Activated T-helper 2 cell treated with anti-CD3 and anti-CD28 coated beads, Interferon-gamma antibody, Interleukin-2, Interleukin-4, amounts not matched to agents 10 μg/mL and 5 μg/mL and 100 μg/mL, durations not matched to agents 14 hours and 24 hours and 36 hours (primary cell): ENCODE measurements at regions of chr14 and their contacts with region 1.

Region 1: DNA sequence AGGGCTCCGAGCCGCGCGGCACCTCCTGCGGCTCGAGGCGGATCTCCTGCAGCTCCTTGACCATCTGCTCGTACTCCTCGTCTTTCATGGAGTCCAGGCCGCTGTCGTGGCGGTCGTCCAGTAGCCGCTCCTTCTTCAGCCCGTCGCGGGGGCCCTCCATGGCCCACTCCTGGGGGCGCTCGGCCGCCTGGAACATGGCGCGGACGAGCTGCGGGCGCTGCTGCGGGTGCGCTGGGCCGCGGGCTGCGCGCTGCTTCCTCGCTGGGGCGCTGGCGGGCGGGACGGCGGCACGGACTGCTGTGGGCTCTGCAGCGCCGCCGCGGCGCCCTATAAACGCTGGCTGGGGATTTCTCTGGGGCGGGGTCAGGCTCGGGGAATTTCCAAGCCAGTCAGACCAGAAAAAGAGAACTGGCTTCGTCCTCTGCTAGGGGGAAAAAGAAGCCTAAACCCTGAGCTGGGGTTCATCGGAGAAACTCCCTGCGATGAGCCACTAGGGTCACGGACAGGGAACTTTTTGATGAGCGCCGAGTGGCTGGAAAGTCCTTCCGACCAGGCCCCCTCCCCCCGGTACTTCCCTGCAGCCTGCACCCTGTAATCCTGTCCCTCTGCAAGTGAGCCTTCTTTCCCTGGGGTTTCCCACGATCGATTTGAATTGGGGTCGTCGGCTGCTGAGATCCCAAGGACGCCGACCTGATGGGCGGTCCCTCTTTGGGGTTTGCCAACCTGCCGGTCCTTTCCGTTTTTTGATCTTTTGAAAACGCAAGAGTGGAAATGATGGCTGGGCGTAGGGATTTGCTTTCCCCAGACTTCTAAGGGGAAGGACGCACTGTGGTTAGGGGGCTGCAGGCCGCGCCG is at the start of gene NFKBIA:
- DNase-seq: peak; percentile 93
- H3K4me3 Mint-ChIP-seq: peak within 1 kb of the TSS; percentile 99
- H3K27ac Mint-ChIP-seq: peak within 1 kb of the TSS; percentile 97
- H3K4me1 Mint-ChIP-seq: peaks cover 43% of the 10 kb centered on the region
- H3K27me3 Mint-ChIP-seq: no peaks in the 10 kb centered on the region
- total RNA-seq, gene NFKBIA: 386 and 390 TPM in 2 replicates

Region 2: DNA sequence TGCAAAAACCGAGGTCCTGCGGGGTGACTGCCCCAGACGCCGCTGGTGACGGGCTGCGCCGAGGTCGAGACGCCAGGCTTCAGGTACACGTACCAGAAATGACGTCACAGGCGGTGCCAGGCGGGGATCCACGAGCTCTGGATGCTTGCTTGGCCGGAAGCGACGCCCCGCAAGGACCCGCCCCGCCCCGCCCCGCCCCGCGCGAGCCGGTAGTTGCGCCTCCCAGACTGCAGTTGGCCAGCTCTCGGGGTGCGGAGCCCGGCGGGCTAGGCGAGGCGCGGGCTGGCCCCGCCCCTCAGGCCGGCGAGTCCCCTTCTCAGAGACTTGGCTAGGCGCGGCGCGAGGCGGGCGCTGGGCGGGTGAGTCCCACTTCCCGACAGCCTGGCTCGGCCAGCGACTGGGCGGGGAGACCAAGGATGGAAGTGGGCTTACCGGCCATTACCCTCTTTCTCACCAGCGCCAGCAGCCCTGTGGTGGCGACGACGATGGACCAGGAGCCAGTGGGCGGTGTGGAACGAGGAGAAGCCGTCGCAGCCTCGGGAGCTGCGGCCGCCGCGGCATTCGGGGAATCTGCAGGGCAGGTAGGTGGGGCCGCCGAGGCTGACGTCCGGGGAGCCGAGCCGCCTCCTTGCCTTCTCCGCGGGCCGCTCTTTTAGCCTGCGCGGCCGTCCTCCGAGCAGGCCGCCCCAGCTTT is 358.5 kb before region 1 on chr14 and contains the start of gene FAM177A1:
- intact Hi-C with region 1: loop called (anchors 5 kb)
- DNase-seq: peak; percentile 97
- H3K4me3 Mint-ChIP-seq: peak within 1 kb of the TSS; percentile 98
- H3K27ac Mint-ChIP-seq: peak within 1 kb of the TSS; percentile 98
- H3K4me1 Mint-ChIP-seq: peaks cover 21% of the 10 kb centered on the region
- H3K27me3 Mint-ChIP-seq: no peaks in the 10 kb centered on the region
- total RNA-seq, gene FAM177A1: 41.3 and 43.2 TPM in 2 replicates

Region 3: GRCh38 chr14:35068238-35069012 is 336.3 kb before region 1 on chr14:
- intact Hi-C with region 1: no loop called
- DNase-seq: no peak
- H3K4me3 Mint-ChIP-seq: no peak overlapping the region
- H3K27ac Mint-ChIP-seq: no peak overlapping the region
- H3K4me1 Mint-ChIP-seq: no peaks in the 10 kb centered on the region
- H3K27me3 Mint-ChIP-seq: no peaks in the 10 kb centered on the region

Region 4: DNA sequence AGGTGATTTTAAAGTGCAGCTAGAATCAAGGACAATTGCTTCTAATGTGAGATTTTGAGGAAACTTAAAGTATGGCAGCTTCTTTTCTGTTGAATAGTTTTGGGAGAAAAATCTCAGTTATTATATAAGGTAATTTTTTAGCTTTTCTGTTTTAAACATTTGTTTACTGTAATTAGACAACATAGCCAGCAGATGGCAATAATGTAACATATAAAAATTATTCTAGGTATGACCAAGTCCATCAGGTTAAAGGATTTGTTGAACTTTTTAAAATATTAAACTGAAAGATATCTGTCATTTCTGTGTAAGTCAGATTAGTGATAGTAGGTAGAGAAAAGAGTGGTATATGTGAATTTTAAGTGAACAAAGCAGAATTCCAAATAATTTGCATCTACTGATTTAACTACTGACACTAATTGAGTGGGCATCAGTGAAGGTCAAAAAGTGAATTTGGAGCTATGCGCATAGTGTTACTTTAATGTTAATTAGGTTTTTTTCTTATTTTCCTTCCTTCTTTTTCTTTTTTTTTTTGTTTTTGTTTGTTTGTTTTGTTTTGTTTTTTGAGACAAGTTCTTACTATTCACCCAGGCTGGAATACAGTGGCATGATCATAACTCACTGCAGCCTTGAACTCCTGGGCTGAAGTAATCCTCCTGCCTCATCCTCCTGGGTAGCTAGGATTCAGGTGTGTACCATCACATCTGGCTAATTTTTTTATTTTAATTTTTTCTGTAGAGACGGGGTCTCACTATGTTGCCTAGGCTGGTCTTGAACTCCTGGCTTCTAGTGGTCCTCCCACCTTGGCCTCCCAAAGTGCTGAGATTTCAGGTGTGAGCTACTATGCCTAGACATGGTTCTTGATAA is 263.7 kb before region 1 on chr14:
- intact Hi-C with region 1: loop called (anchors 1 kb)
- DNase-seq: no peak
- H3K4me3 Mint-ChIP-seq: no peak overlapping the region
- H3K27ac Mint-ChIP-seq: no peak overlapping the region
- H3K4me1 Mint-ChIP-seq: peaks cover 21% of the 10 kb centered on the region
- H3K27me3 Mint-ChIP-seq: no peaks in the 10 kb centered on the region

Region 5: GRCh38 chr14:35229495-35230089 is 175.1 kb before region 1 on chr14:
- intact Hi-C with region 1: loop called (anchors 1 kb)
- DNase-seq: no peak
- H3K4me3 Mint-ChIP-seq: no peak overlapping the region
- H3K27ac Mint-ChIP-seq: peak overlapping the region; percentile 15
- H3K4me1 Mint-ChIP-seq: peaks cover 20% of the 10 kb centered on the region
- H3K27me3 Mint-ChIP-seq: no peaks in the 10 kb centered on the region

Region 6: GRCh38 chr14:35292051-35292769 is 112.5 kb before region 1 on chr14 and contains the start of gene PSMA6:
- intact Hi-C with region 1: loop called (anchors 1 kb)
- DNase-seq: peak; percentile 99
- H3K4me3 Mint-ChIP-seq: peak within 1 kb of the TSS; percentile 99
- H3K27ac Mint-ChIP-seq: peak within 1 kb of the TSS; percentile 96
- H3K4me1 Mint-ChIP-seq: peaks cover 44% of the 10 kb centered on the region
- H3K27me3 Mint-ChIP-seq: no peaks in the 10 kb centered on the region
- total RNA-seq, gene PSMA6: 396 and 397 TPM in 2 replicates

Region 7: GRCh38 chr14:35331605-35332516 is 72.8 kb before region 1 on chr14:
- intact Hi-C with region 1: loop called (anchors 1 kb)
- DNase-seq: no peak
- H3K4me3 Mint-ChIP-seq: no peak overlapping the region
- H3K27ac Mint-ChIP-seq: peak overlapping the region; percentile 96
- H3K4me1 Mint-ChIP-seq: peaks cover 32% of the 10 kb centered on the region
- H3K27me3 Mint-ChIP-seq: no peaks in the 10 kb centered on the region

Region 8: DNA sequence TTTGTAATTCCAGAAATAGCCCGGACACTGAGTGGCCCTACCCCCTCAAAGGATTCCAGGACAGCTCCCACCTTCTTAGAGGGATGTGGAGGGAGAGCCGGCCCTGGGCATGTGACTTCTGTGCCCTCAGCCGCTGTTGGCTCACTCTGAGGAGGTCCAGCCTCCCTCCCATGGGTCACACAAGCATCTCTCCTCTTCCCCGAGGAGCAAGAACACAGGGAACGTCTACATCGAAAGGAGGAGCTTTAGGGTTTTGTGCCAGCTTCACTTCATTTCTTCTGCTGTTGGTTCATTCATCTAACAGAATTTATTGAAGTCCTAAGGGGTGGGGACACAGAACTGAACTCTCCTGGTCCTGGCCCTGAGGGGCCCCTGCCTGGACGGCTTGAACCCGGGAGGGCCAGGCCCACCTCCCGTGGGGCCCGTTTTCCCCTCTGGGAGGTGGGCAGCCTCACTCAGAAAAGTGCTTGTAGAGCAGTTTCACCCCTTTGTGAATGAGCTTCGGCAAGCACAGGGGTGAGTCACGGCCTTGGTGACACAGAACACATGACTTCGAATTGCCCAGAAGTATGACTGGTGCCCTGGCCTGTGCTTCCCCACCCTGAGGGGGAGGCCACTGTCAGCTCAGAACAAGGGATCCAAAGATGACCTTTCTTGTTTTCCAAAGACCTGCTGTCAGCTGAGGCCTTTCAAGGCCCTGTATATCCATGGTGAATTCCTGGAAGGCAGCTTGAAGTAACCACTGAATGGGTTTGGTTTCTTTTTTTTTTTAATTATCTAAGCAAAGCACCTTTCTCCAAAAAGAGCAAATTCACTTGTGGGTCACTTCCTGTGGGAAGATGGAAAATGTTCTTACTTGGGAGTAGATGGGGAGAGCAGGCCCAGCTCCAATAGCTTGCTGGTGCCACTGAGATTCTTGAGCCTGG is 39.3 kb before region 1 on chr14:
- intact Hi-C with region 1: loop called (anchors 2 kb)
- DNase-seq: peak; percentile 38
- H3K4me3 Mint-ChIP-seq: peak overlapping the region; percentile 64
- H3K27ac Mint-ChIP-seq: peak overlapping the region; percentile 97
- H3K4me1 Mint-ChIP-seq: peaks cover 42% of the 10 kb centered on the region
- H3K27me3 Mint-ChIP-seq: no peaks in the 10 kb centered on the region

Region 9: GRCh38 chr14:35375558-35376025 is 29.1 kb before region 1 on chr14:
- intact Hi-C with region 1: no loop called
- DNase-seq: no peak
- H3K4me3 Mint-ChIP-seq: no peak overlapping the region
- H3K27ac Mint-ChIP-seq: no peak overlapping the region
- H3K4me1 Mint-ChIP-seq: no peaks in the 10 kb centered on the region
- H3K27me3 Mint-ChIP-seq: no peaks in the 10 kb centered on the region

Region 10: DNA sequence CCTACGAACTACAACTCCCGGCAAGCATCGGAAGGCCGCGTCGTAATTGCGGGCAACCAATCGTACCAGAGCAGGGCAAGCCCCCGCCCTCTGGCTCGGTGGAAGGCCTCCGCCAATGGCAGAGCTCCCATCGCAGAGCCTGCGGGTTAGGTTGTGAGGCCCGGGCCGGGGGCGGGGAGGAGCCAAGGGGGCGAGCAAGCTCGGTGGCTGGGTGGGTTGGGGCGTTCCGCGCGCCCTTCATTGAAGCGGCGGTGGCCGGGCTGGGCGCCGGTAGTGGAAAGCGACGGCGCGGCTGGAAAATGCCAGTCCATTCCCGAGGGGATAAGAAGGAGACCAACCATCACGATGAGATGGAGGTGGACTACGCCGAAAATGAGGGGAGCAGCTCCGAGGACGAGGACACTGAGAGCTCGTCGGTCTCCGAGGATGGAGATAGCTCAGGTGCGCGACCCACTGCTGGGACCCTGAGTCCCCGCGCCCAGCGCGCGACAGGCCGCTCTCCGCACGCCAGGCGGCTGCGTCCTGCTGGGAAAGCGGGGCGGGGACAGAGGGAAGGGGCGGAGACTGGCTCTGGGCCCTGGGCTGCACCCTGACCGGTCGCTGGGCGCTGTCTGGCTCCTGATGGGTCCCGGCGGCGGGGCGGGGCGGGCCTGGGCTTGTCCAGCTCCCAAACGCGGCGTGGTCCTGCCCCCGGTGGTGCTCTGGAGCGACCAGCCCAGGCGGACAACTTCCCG is 421.7 kb after region 1 on chr14 and contains the start of gene BRMS1L:
- intact Hi-C with region 1: no loop called
- DNase-seq: peak; percentile 96
- H3K4me3 Mint-ChIP-seq: peak within 1 kb of the TSS; percentile 84
- H3K27ac Mint-ChIP-seq: peak within 1 kb of the TSS; percentile 90
- H3K4me1 Mint-ChIP-seq: peaks cover 21% of the 10 kb centered on the region
- H3K27me3 Mint-ChIP-seq: no peaks in the 10 kb centered on the region
- total RNA-seq, gene BRMS1L: 5.3 and 6.1 TPM in 2 replicates